CD4-positive, alpha-beta memory T cell (primary cell): ENCODE measurements at regions of chr5 and their contacts with region 1.

Region 1: GRCh38 chr5:179623003-179623880 is at the start of gene HNRNPH1:
- DNase-seq: peak; percentile 98 to 99 (median 99)
- H3K4me3 ChIP-seq: peak within 1 kb of the TSS; percentile 80 to 95
- H3K4me3 Mint-ChIP-seq: peak within 1 kb of the TSS; percentile 91 to 99 (median 98)
- H3K27ac ChIP-seq: peak within 1 kb of the TSS; percentile 96
- H3K27ac Mint-ChIP-seq: peak within 1 kb of the TSS; percentile 99 to 100 (median 99)
- H3K4me1 ChIP-seq: peaks cover 53% of the 10 kb centered on the region
- H3K4me1 Mint-ChIP-seq: peaks cover 36 to 67% (median 44%) of the 10 kb centered on the region in 4 donors
- H3K27me3 ChIP-seq: no peaks in the 10 kb centered on the region
- H3K27me3 Mint-ChIP-seq: peaks cover 0 to 6% of the 10 kb centered on the region in 2 donors
- total RNA-seq, gene HNRNPH1: 1,611 to 1,625 TPM

Region 2: DNA sequence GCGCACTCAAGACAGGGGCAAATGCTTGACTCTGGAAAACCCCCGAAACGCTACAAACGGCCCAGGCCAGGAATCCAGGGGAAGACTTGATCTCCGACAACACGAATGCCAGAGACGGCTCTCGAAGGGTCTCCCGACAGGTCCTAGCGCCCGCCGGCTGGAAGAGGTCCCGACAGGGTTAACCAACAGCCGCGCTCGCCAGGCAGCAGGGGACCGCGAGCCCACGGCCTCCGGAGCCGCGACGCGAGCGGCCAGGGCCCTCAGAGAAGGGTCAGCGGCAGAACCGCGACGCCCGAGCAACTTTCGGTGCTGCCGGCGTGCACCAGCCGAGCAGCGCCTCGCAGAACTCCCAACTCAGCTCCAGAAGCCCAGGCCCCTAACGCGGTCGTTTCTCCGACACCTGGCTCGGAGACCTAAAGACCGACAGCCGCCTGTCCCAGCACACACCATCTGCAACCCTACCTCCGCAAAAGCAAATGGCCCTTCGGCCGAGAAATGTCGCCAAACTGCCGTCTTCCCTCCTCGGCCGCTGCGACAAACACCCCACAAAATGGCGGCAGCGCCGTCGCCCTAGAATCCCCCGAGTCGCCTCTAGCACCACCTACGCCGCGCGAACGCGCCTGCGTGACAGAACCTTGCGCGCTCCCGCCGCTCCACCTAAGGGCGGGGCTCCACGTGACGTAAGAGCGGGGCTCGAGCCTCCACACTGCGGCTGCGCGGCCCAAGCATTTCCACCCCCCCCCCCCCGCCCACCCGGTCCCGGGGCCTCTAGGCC is 996.6 kb before region 1 on chr5 and contains the start of gene CLK4:
- CTCF ChIA-PET with region 1: no interaction called
- POLR2A ChIA-PET with region 1: interaction called, 4 read pairs
- intact Hi-C with region 1: loop called (anchors 2 kb)
- DNase-seq: peak; percentile 94 to 98 (median 96)
- H3K4me3 ChIP-seq: peak within 1 kb of the TSS; percentile 79 to 96
- H3K4me3 Mint-ChIP-seq: peak within 1 kb of the TSS; percentile 95 to 100 (median 98)
- H3K27ac ChIP-seq: peak within 1 kb of the TSS; percentile 98
- H3K27ac Mint-ChIP-seq: peak within 1 kb of the TSS; percentile 99 to 100 (median 100)
- H3K4me1 ChIP-seq: peaks cover 42% of the 10 kb centered on the region
- H3K4me1 Mint-ChIP-seq: peaks cover 23 to 49% (median 33%) of the 10 kb centered on the region in 4 donors
- H3K27me3 ChIP-seq: no peaks in the 10 kb centered on the region
- H3K27me3 Mint-ChIP-seq: no peaks in the 10 kb centered on the region
- total RNA-seq, gene CLK4: 121 to 125 TPM

Region 3: GRCh38 chr5:179550511-179551230 is 72.6 kb before region 1 on chr5 and contains the start of gene RUFY1:
- CTCF ChIA-PET with region 1: interaction called, 8 read pairs
- POLR2A ChIA-PET with region 1: interaction called, 107 read pairs
- intact Hi-C with region 1: loop called (anchors 1 kb)
- DNase-seq: peak; percentile 81 to 92 (median 87)
- H3K4me3 ChIP-seq: peak within 1 kb of the TSS; percentile 78 to 91
- H3K4me3 Mint-ChIP-seq: peak within 1 kb of the TSS; percentile 94 to 99 (median 96)
- H3K27ac ChIP-seq: peak within 1 kb of the TSS; percentile 66
- H3K27ac Mint-ChIP-seq: peak within 1 kb of the TSS; percentile 94 to 99 (median 97)
- H3K4me1 ChIP-seq: peaks cover 30% of the 10 kb centered on the region
- H3K4me1 Mint-ChIP-seq: peaks cover 17 to 45% (median 27%) of the 10 kb centered on the region in 4 donors
- H3K27me3 ChIP-seq: no peaks in the 10 kb centered on the region
- H3K27me3 Mint-ChIP-seq: no peaks in the 10 kb centered on the region
- total RNA-seq, gene RUFY1: 59.1 to 61.5 TPM

Region 4: GRCh38 chr5:179608131-179608581 is 15.1 kb before region 1 on chr5:
- CTCF ChIA-PET with region 1: interaction called, 63 read pairs
- POLR2A ChIA-PET with region 1: interaction called, 313 read pairs
- intact Hi-C with region 1: loop called (anchors 1 kb)
- DNase-seq: peak; percentile 39 to 69 (median 63)
- H3K4me3 ChIP-seq: no peak overlapping the region
- H3K4me3 Mint-ChIP-seq: peak overlapping the region in 5 of 8 donors; percentile 25 to 69 (median 40)
- H3K27ac ChIP-seq: no peak overlapping the region
- H3K27ac Mint-ChIP-seq: peak overlapping the region; percentile 17 to 100 (median 77)
- H3K4me1 ChIP-seq: peaks cover 46% of the 10 kb centered on the region
- H3K4me1 Mint-ChIP-seq: peaks cover 30 to 60% (median 42%) of the 10 kb centered on the region in 4 donors
- H3K27me3 ChIP-seq: no peaks in the 10 kb centered on the region
- H3K27me3 Mint-ChIP-seq: no peaks in the 10 kb centered on the region

Region 5: GRCh38 chr5:179697993-179698934 is 75.0 kb after region 1 on chr5:
- CTCF ChIA-PET with region 1: interaction called, 3 read pairs
- POLR2A ChIA-PET with region 1: interaction called, 25 read pairs
- intact Hi-C with region 1: loop called (anchors 1 kb)
- DNase-seq: peak; percentile 99
- H3K4me3 ChIP-seq: peak overlapping the region; percentile 76 to 93
- H3K4me3 Mint-ChIP-seq: peak overlapping the region; percentile 91 to 97 (median 95)
- H3K27ac ChIP-seq: peak overlapping the region; percentile 95
- H3K27ac Mint-ChIP-seq: peak overlapping the region; percentile 97 to 100 (median 99)
- H3K4me1 ChIP-seq: peaks cover 46% of the 10 kb centered on the region
- H3K4me1 Mint-ChIP-seq: peaks cover 24 to 63% (median 42%) of the 10 kb centered on the region in 4 donors
- H3K27me3 ChIP-seq: no peaks in the 10 kb centered on the region
- H3K27me3 Mint-ChIP-seq: no peaks in the 10 kb centered on the region

Region 6: DNA sequence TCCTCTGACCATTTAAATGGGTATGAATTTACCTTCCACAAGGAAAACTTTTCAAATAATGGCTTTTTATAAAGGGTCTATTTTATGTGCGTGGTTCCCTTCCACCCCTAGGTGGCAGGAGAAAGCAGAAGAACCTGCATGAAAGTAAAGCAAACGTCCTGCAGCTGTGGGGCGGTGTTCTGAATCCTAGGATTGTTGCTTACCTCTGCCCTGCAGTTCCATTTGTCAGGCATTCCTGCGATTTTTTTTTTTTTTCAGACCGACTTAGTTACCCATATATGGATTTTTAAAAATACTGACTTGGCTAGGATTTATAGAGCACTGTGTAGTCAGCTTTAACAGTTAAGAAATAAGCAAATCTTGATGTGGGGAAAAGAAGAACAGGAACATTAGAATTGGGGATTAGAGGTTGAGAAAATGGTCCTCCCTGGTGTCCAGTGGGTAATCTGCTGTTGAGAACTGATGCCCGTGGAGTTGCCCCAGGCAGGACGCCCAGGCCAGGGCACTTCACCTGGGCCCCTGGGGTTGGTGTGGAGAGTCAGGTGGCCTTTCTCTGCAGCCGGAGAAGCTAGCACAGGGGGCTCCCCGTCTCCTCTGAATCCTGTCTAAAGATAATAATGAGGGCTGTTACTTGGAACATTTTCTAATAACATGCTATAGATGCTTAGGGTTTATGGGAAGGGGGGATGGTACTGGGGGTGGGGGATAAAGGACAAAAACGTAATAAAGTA is 140.1 kb after region 1 on chr5:
- CTCF ChIA-PET with region 1: interaction called, 4 read pairs
- POLR2A ChIA-PET with region 1: interaction called, 10 read pairs
- intact Hi-C with region 1: no loop called
- DNase-seq: peak; percentile 42 to 70 (median 51)
- H3K4me3 ChIP-seq: no peak overlapping the region
- H3K4me3 Mint-ChIP-seq: no peak overlapping the region
- H3K27ac ChIP-seq: no peak overlapping the region
- H3K27ac Mint-ChIP-seq: peak overlapping the region in 5 of 7 donors; percentile 24 to 60 (median 50)
- H3K4me1 ChIP-seq: peaks cover 48% of the 10 kb centered on the region
- H3K4me1 Mint-ChIP-seq: peaks cover 35 to 69% (median 48%) of the 10 kb centered on the region in 4 donors
- H3K27me3 ChIP-seq: no peaks in the 10 kb centered on the region
- H3K27me3 Mint-ChIP-seq: no peaks in the 10 kb centered on the region

Region 7: GRCh38 chr5:179821581-179822432 is 198.6 kb after region 1 on chr5:
- CTCF ChIA-PET with region 1: no interaction called
- POLR2A ChIA-PET with region 1: interaction called, 33 read pairs
- intact Hi-C with region 1: no loop called
- DNase-seq: peak; percentile 89 to 92 (median 90)
- H3K4me3 ChIP-seq: peak overlapping the region; percentile 50 to 83
- H3K4me3 Mint-ChIP-seq: peak overlapping the region; percentile 93 to 98 (median 96)
- H3K27ac ChIP-seq: peak overlapping the region; percentile 99
- H3K27ac Mint-ChIP-seq: peak overlapping the region; percentile 96 to 99 (median 97)
- H3K4me1 ChIP-seq: peaks cover 52% of the 10 kb centered on the region
- H3K4me1 Mint-ChIP-seq: peaks cover 28 to 76% (median 46%) of the 10 kb centered on the region in 4 donors
- H3K27me3 ChIP-seq: no peaks in the 10 kb centered on the region
- H3K27me3 Mint-ChIP-seq: peaks cover 0 to 1% of the 10 kb centered on the region in 2 donors

Region 8: DNA sequence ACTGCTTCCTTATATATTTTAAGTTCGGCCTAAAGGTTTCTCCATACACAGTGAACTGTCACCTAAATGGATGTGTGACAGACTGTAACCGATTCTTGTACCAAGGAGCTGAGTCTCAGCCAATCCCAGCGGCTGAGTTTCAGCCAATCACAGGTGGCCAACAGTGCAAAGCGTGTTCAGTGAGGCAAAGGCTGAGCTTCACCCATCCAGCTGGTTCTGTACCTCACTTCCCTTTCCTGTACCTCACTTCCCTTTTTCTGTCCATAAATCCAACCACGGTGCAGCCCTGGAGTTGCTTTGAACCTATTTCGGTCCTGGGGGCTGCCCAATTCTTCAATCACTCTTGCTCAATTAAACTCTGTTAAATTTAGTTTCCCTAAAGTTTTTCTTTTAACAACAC is 300.2 kb after region 1 on chr5:
- CTCF ChIA-PET with region 1: no interaction called
- POLR2A ChIA-PET with region 1: no interaction called
- intact Hi-C with region 1: no loop called
- DNase-seq: no peak
- H3K4me3 ChIP-seq: no peak overlapping the region
- H3K4me3 Mint-ChIP-seq: no peak overlapping the region
- H3K27ac ChIP-seq: no peak overlapping the region
- H3K27ac Mint-ChIP-seq: no peak overlapping the region
- H3K4me1 ChIP-seq: no peaks in the 10 kb centered on the region
- H3K4me1 Mint-ChIP-seq: no peaks in the 10 kb centered on the region
- H3K27me3 ChIP-seq: peaks cover 4% of the 10 kb centered on the region
- H3K27me3 Mint-ChIP-seq: no peaks in the 10 kb centered on the region